Esophagus squamous epithelium (tissue), 5 donors: ENCODE measurements at regions of chr9 and their contacts with region 1.

Region 1: GRCh38 chr9:69971643-69972449 is 71.8 kb upstream of the MAMDC2 start:
- DNase-seq: no peak
- H3K4me3 ChIP-seq: no peak overlapping the region
- H3K27ac ChIP-seq: no peak overlapping the region
- H3K4me1 ChIP-seq: peaks cover 4 to 11% (median 8%) of the 10 kb centered on the region in 3 donors
- H3K27me3 ChIP-seq: no peaks in the 10 kb centered on the region
- CTCF ChIP-seq: peak; percentile 35 to 87 (median 76)
- POLR2A ChIP-seq: no peak

Region 2: DNA sequence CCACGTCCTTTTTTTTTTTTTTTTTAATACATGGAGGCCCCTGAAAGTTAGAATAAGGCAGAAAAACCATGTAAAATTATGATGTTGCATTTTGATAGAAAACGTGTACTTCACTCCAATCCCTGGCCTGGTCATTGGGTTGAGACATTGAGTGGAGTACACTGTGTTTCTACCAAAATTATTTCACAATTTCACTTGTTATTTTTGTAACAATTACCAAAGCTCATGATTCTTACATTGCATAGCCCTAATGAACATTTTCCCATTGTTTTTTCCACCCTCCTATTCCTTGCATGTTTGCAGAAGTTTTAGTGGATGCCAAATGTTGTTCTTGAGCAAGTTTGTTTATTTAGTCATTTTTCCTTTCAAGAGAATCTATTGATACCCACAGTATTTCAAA is 93.7 kb after region 1 on chr9:
- intact Hi-C with region 1: no loop called
- DNase-seq: no peak
- H3K4me3 ChIP-seq: no peak overlapping the region
- H3K27ac ChIP-seq: peak overlapping the region; percentile 50 to 90 (median 85)
- H3K4me1 ChIP-seq: peaks cover 0 to 60% (median 20%) of the 10 kb centered on the region in 3 donors
- H3K27me3 ChIP-seq: no peaks in the 10 kb centered on the region
- CTCF ChIP-seq: no peak
- POLR2A ChIP-seq: no peak

Region 3: GRCh38 chr9:70111042-70111602 is 139.3 kb after region 1 on chr9:
- intact Hi-C with region 1: loop called (anchors 2 kb)
- DNase-seq: no peak
- H3K4me3 ChIP-seq: no peak overlapping the region
- H3K27ac ChIP-seq: peak overlapping the region in 3 of 4 donors; percentile 16 to 58 (median 24)
- H3K4me1 ChIP-seq: peaks cover 0 to 35% (median 0%) of the 10 kb centered on the region in 3 donors
- H3K27me3 ChIP-seq: no peaks in the 10 kb centered on the region
- CTCF ChIP-seq: peak; percentile 79 to 93 (median 85)
- POLR2A ChIP-seq: no peak

Region 4: GRCh38 chr9:70602321-70603019 is 630.6 kb after region 1 on chr9:
- intact Hi-C with region 1: loop called (anchors 10 kb)
- DNase-seq: no peak
- H3K4me3 ChIP-seq: peak overlapping the region in 1 of 4 donors; percentile 1
- H3K27ac ChIP-seq: peak overlapping the region; percentile 63 to 93 (median 88)
- H3K4me1 ChIP-seq: peaks cover 15 to 34% (median 17%) of the 10 kb centered on the region in 3 donors
- H3K27me3 ChIP-seq: no peaks in the 10 kb centered on the region
- CTCF ChIP-seq: peak in 5 of 6 experiments; percentile 71 to 90 (median 79)
- POLR2A ChIP-seq: no peak